OCI-LY7 (cell line): ENCODE measurements at regions of chr5 and their contacts with region 1.

Region 1: DNA sequence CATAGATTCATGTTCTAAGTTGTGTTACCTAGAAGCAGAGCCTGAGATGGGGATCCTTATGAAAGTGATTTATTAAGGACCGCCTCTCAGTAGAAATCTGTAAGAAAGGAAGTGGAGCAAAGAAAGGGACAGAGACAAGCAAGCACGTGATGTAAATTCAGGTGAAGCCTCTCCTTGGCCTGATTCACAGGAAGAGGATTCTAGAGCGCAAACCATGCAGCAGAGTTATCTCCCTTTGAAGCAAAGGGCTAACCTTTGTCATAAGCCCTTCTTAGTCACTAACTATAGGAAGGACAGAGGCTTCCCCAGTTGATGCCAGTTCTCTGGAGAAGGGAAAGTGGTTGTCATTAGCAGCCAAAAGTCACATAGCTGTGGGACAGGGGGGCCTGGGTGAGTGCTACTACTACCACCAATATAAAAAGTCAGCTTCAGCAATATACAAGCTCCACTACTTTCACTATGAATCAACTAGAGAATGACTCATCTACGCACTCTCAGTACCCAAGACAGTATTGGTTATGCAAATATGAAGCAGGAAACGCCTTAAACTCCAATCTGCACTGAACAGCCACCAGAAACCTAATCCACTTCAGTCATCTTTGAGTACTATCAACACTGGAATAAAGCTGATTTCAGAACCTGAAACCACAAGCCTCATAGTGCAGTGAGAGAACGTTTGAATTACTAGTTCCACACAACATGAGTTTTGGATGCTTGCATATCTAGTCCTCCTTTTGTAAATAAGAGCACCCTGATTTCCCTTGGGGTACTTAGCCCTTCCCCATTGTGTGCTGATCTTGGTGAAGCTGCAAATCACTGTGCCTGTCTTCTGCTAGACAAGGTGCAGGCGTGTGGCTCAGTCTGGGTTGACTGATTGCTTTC is 162.7 kb downstream of the ZNF608 start:
- DNase-seq: peak; percentile 34
- H3K4me3 ChIP-seq: no peak overlapping the region
- H3K27ac ChIP-seq: no peak overlapping the region
- H3K4me1 ChIP-seq: peaks cover 12% of the 10 kb centered on the region
- CTCF ChIP-seq: no peak

Region 2: GRCh38 chr5:124599028-124599973 is 15.6 kb after region 1 on chr5:
- CTCF ChIA-PET with region 1: no interaction called
- POLR2A ChIA-PET with region 1: interaction called, 22 read pairs
- intact Hi-C with region 1: no loop called
- DNase-seq: peak; percentile 72
- H3K4me3 ChIP-seq: no peak overlapping the region
- H3K27ac ChIP-seq: peak overlapping the region; percentile 25
- H3K4me1 ChIP-seq: peaks cover 23% of the 10 kb centered on the region
- CTCF ChIP-seq: no peak

Region 3: DNA sequence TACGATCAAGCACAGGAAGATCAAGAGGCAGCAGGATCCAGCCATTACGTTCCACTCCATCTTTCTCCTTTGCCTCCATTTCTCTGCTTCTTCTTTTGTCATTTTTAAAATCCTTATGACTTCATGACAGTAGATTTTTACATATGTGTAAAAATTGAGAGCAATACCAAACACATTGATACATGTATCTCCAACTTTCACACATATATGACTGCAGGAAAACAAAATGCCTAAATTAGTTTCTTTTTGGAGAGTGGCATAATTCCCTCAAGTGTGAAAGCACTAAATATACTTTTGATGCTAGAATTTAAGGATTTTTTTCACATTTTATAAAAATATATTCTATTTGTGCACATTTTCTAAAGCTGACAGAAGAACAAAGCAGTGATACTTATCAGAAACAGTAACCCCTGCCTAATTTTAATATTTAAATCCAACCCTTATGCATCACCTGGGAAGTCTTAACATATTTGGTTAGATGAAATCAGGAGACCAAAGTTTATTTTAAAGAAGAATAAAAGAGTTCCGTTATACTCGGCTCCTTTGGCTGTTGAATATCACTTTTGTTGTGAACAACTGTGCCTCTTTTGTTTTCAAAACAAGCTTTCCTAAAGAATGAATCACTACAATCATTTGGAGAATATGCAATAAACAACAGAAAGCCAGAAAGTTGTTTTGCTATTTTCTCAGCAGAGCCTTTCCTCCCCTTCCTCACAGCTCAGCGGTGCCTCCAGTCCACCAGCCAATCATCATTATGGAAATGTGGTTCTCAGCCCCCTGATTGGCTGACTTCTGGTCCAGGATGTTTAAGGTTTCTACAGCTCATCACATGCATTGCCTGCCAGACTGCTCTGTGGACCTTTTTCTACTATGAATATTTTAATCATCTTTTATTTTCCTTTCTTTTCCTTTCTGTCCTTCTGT is 171.6 kb after region 1 on chr5:
- CTCF ChIA-PET with region 1: no interaction called
- POLR2A ChIA-PET with region 1: no interaction called
- intact Hi-C with region 1: no loop called
- DNase-seq: peak; percentile 29
- H3K4me3 ChIP-seq: peak overlapping the region; percentile 47
- H3K27ac ChIP-seq: no peak overlapping the region
- H3K4me1 ChIP-seq: peaks cover 34% of the 10 kb centered on the region
- CTCF ChIP-seq: no peak